Activated B cell treated with CpG ODN at 0.5 μM for 24 hours (primary cell): ENCODE measurements at regions of chr12 and their contacts with region 1.

Region 1: GRCh38 chr12:39990122-39991101 is 115.5 kb downstream of the SLC2A13 start:
- DNase-seq: peak; percentile 33
- ATAC-seq: peak; percentile 84
- H3K4me3 Mint-ChIP-seq: no peak overlapping the region
- H3K27ac Mint-ChIP-seq: no peak overlapping the region
- H3K4me1 Mint-ChIP-seq: peaks cover 4% of the 10 kb centered on the region
- H3K27me3 Mint-ChIP-seq: no peaks in the 10 kb centered on the region
- CTCF ChIP-seq: peak; percentile 17

Region 2: GRCh38 chr12:38477341-38478090 is 1512.9 kb before region 1 on chr12:
- CTCF ChIA-PET with region 1: no interaction called
- POLR2A ChIA-PET with region 1: no interaction called
- intact Hi-C with region 1: no loop called
- DNase-seq: no peak
- ATAC-seq: no peak
- H3K4me3 Mint-ChIP-seq: no peak overlapping the region
- H3K27ac Mint-ChIP-seq: no peak overlapping the region
- H3K4me1 Mint-ChIP-seq: no peaks in the 10 kb centered on the region
- H3K27me3 Mint-ChIP-seq: no peaks in the 10 kb centered on the region
- CTCF ChIP-seq: no peak

Region 3: GRCh38 chr12:39587225-39587624 is 403.2 kb before region 1 on chr12:
- CTCF ChIA-PET with region 1: interaction called, 8 read pairs
- POLR2A ChIA-PET with region 1: no interaction called
- intact Hi-C with region 1: loop called (anchors 1 kb)
- DNase-seq: no peak
- ATAC-seq: peak; percentile 62
- H3K4me3 Mint-ChIP-seq: no peak overlapping the region
- H3K27ac Mint-ChIP-seq: no peak overlapping the region
- H3K4me1 Mint-ChIP-seq: peaks cover 2% of the 10 kb centered on the region
- H3K27me3 Mint-ChIP-seq: no peaks in the 10 kb centered on the region
- CTCF ChIP-seq: no peak

Region 4: DNA sequence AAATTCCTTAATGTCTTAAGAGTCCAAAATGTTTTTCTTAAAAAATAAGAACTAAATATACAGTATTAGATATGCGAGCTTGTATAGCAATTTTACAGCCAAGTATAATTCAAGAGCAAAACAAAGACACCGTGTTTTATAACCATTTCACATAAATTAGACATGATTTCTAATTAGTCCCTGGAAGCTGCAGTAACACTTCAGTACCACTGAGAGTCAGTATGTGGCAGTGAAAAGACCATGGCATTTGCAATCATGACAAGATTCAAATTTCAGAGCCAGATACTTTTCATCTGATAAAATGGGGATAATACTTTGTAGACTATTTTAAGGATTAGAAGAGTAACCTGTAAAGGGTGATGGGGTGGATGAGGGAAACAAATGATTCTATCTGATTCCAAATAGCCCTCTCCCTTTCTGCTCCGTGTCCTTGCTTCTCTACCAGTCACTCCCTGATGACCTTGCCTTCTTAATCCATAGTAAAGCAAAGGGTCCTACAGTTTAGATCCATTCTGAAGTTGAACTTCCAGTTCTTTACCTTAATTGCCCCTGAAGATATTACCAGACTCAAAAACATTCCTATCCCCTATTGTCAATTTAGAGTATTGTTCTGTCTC is 225.4 kb before region 1 on chr12:
- CTCF ChIA-PET with region 1: interaction called, 9 read pairs
- POLR2A ChIA-PET with region 1: no interaction called
- intact Hi-C with region 1: loop called (anchors 1 kb)
- DNase-seq: no peak
- ATAC-seq: peak; percentile 45
- H3K4me3 Mint-ChIP-seq: no peak overlapping the region
- H3K27ac Mint-ChIP-seq: no peak overlapping the region
- H3K4me1 Mint-ChIP-seq: no peaks in the 10 kb centered on the region
- H3K27me3 Mint-ChIP-seq: no peaks in the 10 kb centered on the region
- CTCF ChIP-seq: peak; percentile 37